ENCODE measurements at regions of chr17 and their contacts with region 1.

Region 1: GRCh38 chr17:50865984-50866774 is at the start of gene TOB1:
- DNase-seq: peak; percentile 97
- CTCF ChIP-seq: no peak

Region 2: GRCh38 chr17:50810050-50810449 is 56.1 kb before region 1 on chr17:
- CTCF ChIA-PET with region 1: no interaction called
- POLR2A ChIA-PET with region 1: no interaction called
- DNase-seq: no peak
- CTCF ChIP-seq: no peak

Region 3: GRCh38 chr17:50853015-50853615 is 13.1 kb before region 1 on chr17:
- CTCF ChIA-PET with region 1: interaction called, 127 read pairs
- POLR2A ChIA-PET with region 1: interaction called, 37 read pairs
- DNase-seq: no peak
- CTCF ChIP-seq: no peak

Region 4: GRCh38 chr17:50931144-50931908 is 65.1 kb after region 1 on chr17:
- CTCF ChIA-PET with region 1: interaction called, 3 read pairs
- POLR2A ChIA-PET with region 1: interaction called, 14 read pairs
- DNase-seq: peak; percentile 57
- CTCF ChIP-seq: no peak

Region 5: GRCh38 chr17:50949989-50950881 is 84.1 kb after region 1 on chr17:
- CTCF ChIA-PET with region 1: interaction called, 62 read pairs
- POLR2A ChIA-PET with region 1: interaction called, 19 read pairs
- DNase-seq: peak; percentile 79
- CTCF ChIP-seq: peak; percentile 89

Measured in GM10248 (cell line).